Calu3 (cell line): ENCODE measurements at regions of chr1 and their contacts with region 1.

Region 1: DNA sequence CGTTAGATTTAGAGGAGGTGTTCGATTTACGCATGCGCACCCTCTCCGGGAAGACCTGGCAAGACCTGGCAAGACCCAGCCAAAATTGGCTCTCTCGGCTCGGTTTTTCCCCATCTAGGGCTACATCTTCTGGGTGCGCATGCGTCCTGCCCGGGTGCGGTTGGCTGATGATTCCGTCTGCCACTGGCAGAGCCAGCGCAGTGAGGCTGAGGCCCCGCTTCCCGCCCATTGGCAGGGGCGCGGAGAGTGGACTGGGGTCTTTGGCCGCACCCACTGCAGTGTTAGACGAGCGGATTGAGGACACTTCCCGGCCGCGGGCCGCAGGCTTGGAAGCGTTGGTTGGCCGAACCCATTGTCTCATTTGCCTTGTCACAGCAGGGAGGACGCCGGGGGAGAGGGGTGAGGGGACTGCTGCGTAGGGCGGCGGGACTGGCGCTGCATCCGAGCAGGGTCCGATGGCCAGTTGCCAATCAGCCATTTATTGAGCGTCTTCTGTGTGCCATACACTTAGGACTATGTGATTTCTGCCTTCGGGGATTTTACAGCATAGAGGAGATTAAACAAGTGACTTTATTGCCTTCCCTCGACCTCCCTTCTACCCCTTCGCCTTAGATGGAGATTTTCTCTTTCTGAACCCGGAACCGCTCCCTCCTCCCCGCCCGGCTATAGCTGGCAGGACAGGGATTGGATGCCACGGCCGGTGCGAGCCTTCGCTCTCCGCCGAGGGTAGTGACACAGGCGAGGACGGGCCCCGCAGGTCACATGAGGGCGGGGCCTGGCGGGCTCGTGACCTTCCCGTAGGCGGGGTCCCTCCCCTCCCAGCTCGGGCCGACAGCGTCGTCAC is 43.7 kb downstream of the MEF2D start:
- DNase-seq: peak; percentile 99
- H3K4me3 Mint-ChIP-seq: peak overlapping the region; percentile 90
- H3K27ac Mint-ChIP-seq: peak overlapping the region; percentile 98
- H3K4me1 Mint-ChIP-seq: peaks cover 23% of the 10 kb centered on the region
- H3K27me3 Mint-ChIP-seq: peaks cover 4% of the 10 kb centered on the region
- CTCF ChIP-seq: no peak

Region 2: GRCh38 chr1:156383023-156383422 is 73.8 kb before region 1 on chr1:
- CTCF ChIA-PET with region 1: interaction called, 17 read pairs
- intact Hi-C with region 1: no loop called
- DNase-seq: peak; percentile 82
- H3K4me3 Mint-ChIP-seq: no peak overlapping the region
- H3K27ac Mint-ChIP-seq: no peak overlapping the region
- H3K4me1 Mint-ChIP-seq: no peaks in the 10 kb centered on the region
- H3K27me3 Mint-ChIP-seq: peaks cover 33% of the 10 kb centered on the region
- CTCF ChIP-seq: peak; percentile 94

Region 3: GRCh38 chr1:156471496-156472490 is 14.9 kb after region 1 on chr1:
- CTCF ChIA-PET with region 1: interaction called, 12 read pairs
- intact Hi-C with region 1: loop called (anchors 1 kb)
- DNase-seq: peak; percentile 93
- H3K4me3 Mint-ChIP-seq: peak overlapping the region; percentile 27
- H3K27ac Mint-ChIP-seq: peak overlapping the region; percentile 66
- H3K4me1 Mint-ChIP-seq: peaks cover 34% of the 10 kb centered on the region
- H3K27me3 Mint-ChIP-seq: no peaks in the 10 kb centered on the region
- CTCF ChIP-seq: no peak

Region 4: GRCh38 chr1:156571949-156572662 is 115.3 kb after region 1 on chr1 and contains the start of gene IQGAP3:
- CTCF ChIA-PET with region 1: interaction called, 18 read pairs
- intact Hi-C with region 1: no loop called
- DNase-seq: peak; percentile 95
- H3K4me3 Mint-ChIP-seq: peak within 1 kb of the TSS; percentile 92
- H3K27ac Mint-ChIP-seq: peak within 1 kb of the TSS; percentile 80
- H3K4me1 Mint-ChIP-seq: peaks cover 38% of the 10 kb centered on the region
- H3K27me3 Mint-ChIP-seq: peaks cover 22% of the 10 kb centered on the region
- CTCF ChIP-seq: no peak
- total RNA-seq, gene IQGAP3: 66.2 and 93.6 TPM in 2 replicates

Region 5: GRCh38 chr1:156608036-156608674 is 151.3 kb after region 1 on chr1:
- CTCF ChIA-PET with region 1: interaction called, 3 read pairs
- intact Hi-C with region 1: loop called (anchors 1 kb)
- DNase-seq: peak; percentile 64
- H3K4me3 Mint-ChIP-seq: no peak overlapping the region
- H3K27ac Mint-ChIP-seq: no peak overlapping the region
- H3K4me1 Mint-ChIP-seq: peaks cover 23% of the 10 kb centered on the region
- H3K27me3 Mint-ChIP-seq: no peaks in the 10 kb centered on the region
- CTCF ChIP-seq: peak; percentile 50